Activated naive CD4-positive, alpha-beta T cell treated with anti-CD3 and anti-CD28 coated beads for 36 hours (primary cell): ENCODE measurements at regions of chr3 and their contacts with region 1.

Region 1: GRCh38 chr3:46496741-46497554 is 828 bp upstream of the RTP3 start:
- DNase-seq: peak; percentile 78
- H3K4me3 Mint-ChIP-seq: no peak overlapping the region
- H3K27ac Mint-ChIP-seq: no peak overlapping the region
- H3K4me1 Mint-ChIP-seq: peaks cover 10% of the 10 kb centered on the region
- H3K27me3 Mint-ChIP-seq: no peaks in the 10 kb centered on the region

Region 2: DNA sequence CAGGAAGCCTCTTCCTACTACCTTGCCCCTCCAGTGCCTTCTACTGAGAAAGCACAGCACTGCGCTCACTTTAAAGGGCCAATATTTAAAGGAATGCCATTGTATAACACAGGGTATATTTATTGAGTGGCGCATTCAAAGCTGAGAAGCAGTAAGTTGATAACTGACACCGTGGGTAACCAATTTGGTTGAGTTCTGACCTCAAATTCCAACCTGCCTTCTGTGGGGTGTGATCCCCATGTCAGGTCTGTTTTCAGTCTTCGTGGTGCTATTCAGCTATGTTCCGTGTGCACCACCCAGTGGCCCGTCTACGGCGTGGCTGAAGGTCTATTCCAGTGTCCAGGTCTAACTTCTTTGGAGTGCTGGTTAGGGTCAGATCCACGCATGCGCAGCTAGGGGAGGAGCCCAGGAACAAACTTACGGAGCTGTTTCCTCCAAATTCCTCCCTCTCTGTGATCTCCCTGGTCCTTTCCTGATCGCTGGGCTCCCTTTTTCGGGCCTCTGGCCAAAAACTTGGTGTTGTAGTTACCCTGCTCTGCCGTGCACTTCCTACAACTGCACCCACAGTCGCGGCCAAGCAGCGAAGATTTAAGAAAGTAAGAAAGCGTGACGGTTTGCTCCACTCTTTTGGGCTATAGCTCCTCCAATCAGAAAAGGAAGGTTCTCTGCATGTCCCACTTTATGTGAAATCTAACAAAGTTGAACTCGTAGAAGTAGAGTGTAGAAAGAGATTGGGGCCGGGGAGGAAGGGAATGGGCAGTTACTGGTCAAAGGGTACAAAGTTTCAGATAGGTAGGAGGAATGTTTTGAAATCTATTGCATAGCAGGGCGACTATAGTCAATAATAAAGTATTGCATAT is 61.5 kb after region 1 on chr3:
- CTCF ChIA-PET with region 1: interaction called, 11 read pairs
- intact Hi-C with region 1: loop called (anchors 1 kb)
- DNase-seq: peak; percentile 82
- H3K4me3 Mint-ChIP-seq: peak overlapping the region; percentile 69
- H3K27ac Mint-ChIP-seq: no peak overlapping the region
- H3K4me1 Mint-ChIP-seq: peaks cover 10% of the 10 kb centered on the region
- H3K27me3 Mint-ChIP-seq: peaks cover 3% of the 10 kb centered on the region